ENCODE measurements at regions of chr9 and their contacts with region 1.

Region 1: DNA sequence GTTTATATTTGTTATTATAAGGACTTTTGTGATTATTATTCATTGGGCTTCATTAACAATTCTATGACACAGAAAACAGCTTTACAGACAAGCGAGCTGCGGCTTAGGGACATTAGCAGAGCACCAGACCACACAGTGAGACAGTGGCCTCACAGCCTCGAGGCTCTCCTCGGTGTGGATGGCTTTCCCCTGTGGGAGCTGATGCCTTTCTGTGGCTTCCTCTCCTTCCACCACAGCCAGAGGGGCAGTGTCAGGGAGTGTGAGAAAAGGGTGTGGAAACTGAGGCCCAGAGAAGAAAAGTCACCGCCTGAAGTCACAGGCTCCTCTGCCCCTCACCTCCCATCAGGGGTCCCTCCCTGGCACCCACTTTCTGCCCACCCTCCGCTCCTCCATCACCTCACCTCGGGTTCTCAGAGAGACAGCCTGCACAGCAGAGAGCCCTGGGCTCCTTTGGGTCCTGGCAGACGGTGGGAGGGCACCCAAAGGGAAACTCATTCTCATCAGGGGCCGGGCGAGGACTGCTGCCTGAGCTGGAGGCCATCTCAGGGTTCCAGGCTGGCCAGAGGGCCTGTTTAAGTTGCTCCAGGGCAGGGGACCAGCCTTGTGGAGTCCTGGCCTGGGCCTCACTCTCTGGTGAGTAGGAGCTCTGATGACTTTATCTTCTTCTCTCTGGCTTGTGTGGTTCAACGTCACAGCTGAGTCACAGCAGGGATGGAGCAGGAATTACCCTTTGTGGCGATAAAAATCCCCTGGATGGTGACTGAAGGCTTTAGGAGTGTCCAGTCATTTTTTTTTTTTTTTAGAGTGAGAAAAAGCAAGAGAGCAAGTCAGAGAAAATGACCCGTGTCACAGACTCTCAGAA is 830 bp downstream of the TRAF1 start:
- DNase-seq: no peak
- H3K4me3 ChIP-seq: no peak overlapping the region
- H3K27ac ChIP-seq: peak overlapping the region; percentile 44 to 98 (median 74)
- H3K4me1 ChIP-seq: peaks cover 19 to 55% (median 41%) of the 10 kb centered on the region in 4 donors
- H3K27me3 ChIP-seq: no peaks in the 10 kb centered on the region
- CTCF ChIP-seq: no peak
- EP300 ChIP-seq: no peak
- POLR2A ChIP-seq: no peak

Region 2: DNA sequence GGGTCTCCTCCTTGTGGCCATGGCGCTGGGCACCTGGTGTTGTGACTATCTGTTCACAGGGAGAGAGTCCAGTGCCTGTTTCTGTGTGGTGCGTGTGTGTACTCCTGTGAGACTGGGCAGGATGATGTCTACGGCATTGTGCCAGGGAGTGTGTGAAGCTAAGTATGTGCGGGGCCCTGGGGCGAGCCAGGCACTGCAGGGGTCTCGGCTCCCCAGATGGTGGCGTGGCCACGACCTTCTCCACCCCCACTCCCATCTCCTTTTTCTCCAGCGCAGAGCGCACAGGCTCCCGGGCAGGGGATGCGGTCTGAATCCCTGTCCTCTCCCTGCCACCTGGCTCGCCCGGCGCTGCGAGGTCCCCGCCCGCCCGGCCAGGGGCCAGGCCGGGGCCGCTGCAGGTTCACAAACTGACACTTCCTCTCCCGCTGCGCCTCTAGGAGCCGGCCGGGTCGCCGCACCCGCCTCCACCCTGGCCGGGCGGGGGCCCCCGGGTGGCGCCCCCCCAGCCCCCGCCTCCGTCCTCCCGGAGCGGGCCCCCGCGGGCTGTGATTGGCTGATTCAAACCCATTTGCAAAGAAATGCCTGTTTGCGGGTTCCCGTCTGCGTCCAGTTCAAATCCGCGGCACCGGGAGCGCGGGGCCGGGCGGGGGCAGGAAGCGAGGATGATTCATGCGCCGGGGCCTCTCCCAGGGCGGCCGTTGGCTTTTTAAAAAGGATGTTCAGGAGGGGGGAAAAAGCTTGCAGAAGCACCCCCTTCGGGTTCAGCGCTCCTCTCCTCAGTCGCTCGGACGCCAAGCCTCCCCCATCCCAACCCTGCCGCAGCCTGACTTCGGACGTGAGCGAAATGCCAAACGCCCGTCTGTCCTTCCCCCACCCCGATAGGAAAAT is 49.6 kb before region 1 on chr9:
- intact Hi-C with region 1: loop called (anchors 2 kb)
- DNase-seq: peak; percentile 97
- H3K4me3 ChIP-seq: peak overlapping the region; percentile 70 to 97 (median 86)
- H3K27ac ChIP-seq: peak overlapping the region; percentile 95 to 100 (median 99)
- H3K4me1 ChIP-seq: peaks cover 15 to 30% (median 21%) of the 10 kb centered on the region in 4 donors
- H3K27me3 ChIP-seq: peaks cover 0 to 4% (median 0%) of the 10 kb centered on the region in 4 donors
- CTCF ChIP-seq: peak in 1 of 3 experiments; percentile 7
- EP300 ChIP-seq: no peak
- POLR2A ChIP-seq: no peak

Measured in esophagus muscularis mucosa (tissue), 4 donors.